BJ (cell line): ENCODE measurements at regions of chr5 and their contacts with region 1.

Region 1: GRCh38 chr5:101942321-101943215 is 353.5 kb downstream of the SLCO4C1 start:
- DNase-seq: no peak
- H3K4me3 ChIP-seq: no peak overlapping the region
- H3K27me3 ChIP-seq: no peaks in the 10 kb centered on the region
- CTCF ChIP-seq: peak; percentile 41; the same call in 1 of the 2 replicates

Region 2: GRCh38 chr5:101955891-101956290 is 13.3 kb after region 1 on chr5:
- CTCF ChIA-PET with region 1: interaction called, 11 read pairs
- POLR2A ChIA-PET with region 1: interaction called, 4 read pairs
- DNase-seq: no peak
- H3K4me3 ChIP-seq: no peak overlapping the region
- H3K27me3 ChIP-seq: no peaks in the 10 kb centered on the region
- CTCF ChIP-seq: no peak

Region 3: DNA sequence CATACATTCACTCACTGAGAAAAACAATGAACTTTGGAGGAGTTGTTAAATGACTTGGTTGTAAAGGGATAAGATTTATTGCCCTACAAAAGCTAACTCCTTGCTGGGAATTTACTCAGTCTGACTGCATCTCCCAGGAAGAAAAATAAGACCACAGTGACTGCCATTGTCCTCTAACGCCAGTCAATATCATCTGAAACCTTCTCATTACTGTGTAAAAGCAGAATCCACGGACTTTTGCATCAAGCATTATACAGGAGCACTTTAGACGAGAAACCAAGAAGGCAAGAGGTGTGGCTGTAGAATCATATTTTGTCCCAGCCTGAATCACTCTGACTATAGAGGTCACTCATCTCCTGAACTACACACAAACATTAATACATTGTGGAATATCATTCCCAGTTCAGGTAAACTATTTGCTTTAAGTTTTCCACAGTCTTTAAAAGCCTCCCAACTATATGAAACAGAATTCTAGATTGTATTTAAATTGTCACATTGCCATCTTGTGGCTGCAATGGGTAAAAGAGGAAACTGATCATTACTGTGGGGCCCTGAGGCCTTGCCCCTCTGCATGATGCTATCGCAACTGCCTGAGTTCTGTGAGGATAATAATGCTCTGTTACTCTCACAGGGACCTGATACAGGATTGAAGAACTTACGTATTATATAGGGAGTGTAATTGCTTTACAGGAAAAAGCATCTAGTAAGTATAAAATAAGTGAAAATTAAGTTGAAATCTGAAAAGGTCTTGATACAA is 210.6 kb after region 1 on chr5:
- CTCF ChIA-PET with region 1: interaction called, 20 read pairs
- POLR2A ChIA-PET with region 1: no interaction called
- DNase-seq: no peak
- H3K4me3 ChIP-seq: no peak overlapping the region
- H3K27me3 ChIP-seq: no peaks in the 10 kb centered on the region
- CTCF ChIP-seq: 0 out of 2 replicates have a peak, but pooled peaks have one; percentile 6